ENCODE measurements at regions of chr2 and their contacts with region 1.

Region 1: GRCh38 chr2:45611020-45611737 is at the start of gene SRBD1:
- DNase-seq: peak; percentile 96
- H3K4me3 Mint-ChIP-seq: peak within 1 kb of the TSS; percentile 96
- H3K27ac Mint-ChIP-seq: peak within 1 kb of the TSS; percentile 94
- H3K4me1 Mint-ChIP-seq: peaks cover 53% of the 10 kb centered on the region
- H3K27me3 Mint-ChIP-seq: no peaks in the 10 kb centered on the region
- CTCF ChIP-seq: no peak
- total RNA-seq, gene SRBD1: 17.3 and 18.2 TPM in 2 replicates

Region 2: GRCh38 chr2:45585267-45585861 is 25.8 kb before region 1 on chr2:
- CTCF ChIA-PET with region 1: interaction called, 17 read pairs
- POLR2A ChIA-PET with region 1: interaction called, 6 read pairs
- intact Hi-C with region 1: loop called (anchors 1 kb)
- DNase-seq: peak; percentile 59
- H3K4me3 Mint-ChIP-seq: no peak overlapping the region
- H3K27ac Mint-ChIP-seq: no peak overlapping the region
- H3K4me1 Mint-ChIP-seq: peaks cover 7% of the 10 kb centered on the region
- H3K27me3 Mint-ChIP-seq: no peaks in the 10 kb centered on the region
- CTCF ChIP-seq: peak; percentile 54

Region 3: DNA sequence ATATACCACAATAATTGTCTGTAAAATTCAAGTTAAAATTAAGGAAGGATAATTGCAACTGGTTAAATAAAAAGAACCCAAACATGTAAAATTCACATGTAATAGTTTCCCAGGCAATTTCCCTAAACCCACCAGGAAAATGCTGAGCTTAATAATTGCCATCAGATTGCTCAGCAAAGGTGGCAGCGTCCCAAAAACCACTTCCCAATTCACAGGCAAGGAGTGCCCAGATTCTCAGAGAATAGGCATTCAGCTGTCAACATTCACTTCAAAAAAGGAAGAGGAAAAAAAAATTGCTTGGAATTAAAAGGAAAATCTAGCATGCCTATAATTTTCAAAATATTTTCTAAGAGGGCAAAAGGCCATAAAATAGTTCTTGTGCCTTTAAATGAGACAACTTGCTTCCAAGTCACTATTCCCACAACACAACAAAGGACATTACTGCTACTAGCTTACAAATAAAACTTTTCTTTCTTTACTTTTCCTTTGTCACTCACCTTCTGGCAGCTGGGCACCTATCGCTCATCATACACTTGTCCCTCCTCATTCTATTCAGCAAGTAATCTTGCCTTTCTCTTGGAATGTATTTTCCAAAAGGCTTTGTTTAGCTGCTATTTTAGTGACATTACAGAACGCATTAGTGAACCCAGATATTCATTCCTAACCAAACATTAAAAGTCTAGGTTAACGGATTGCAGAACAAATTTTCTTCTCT is 15.3 kb before region 1 on chr2:
- CTCF ChIA-PET with region 1: interaction called, 8 read pairs
- POLR2A ChIA-PET with region 1: interaction called, 11 read pairs
- intact Hi-C with region 1: no loop called
- DNase-seq: peak; percentile 42
- H3K4me3 Mint-ChIP-seq: peak overlapping the region; percentile 1
- H3K27ac Mint-ChIP-seq: peak overlapping the region; percentile 80
- H3K4me1 Mint-ChIP-seq: peaks cover 10% of the 10 kb centered on the region
- H3K27me3 Mint-ChIP-seq: no peaks in the 10 kb centered on the region
- CTCF ChIP-seq: no peak

Region 4: GRCh38 chr2:45681675-45682074 is 70.5 kb after region 1 on chr2:
- CTCF ChIA-PET with region 1: no interaction called
- POLR2A ChIA-PET with region 1: no interaction called
- intact Hi-C with region 1: no loop called
- DNase-seq: peak; percentile 84
- H3K4me3 Mint-ChIP-seq: no peak overlapping the region
- H3K27ac Mint-ChIP-seq: no peak overlapping the region
- H3K4me1 Mint-ChIP-seq: peaks cover 30% of the 10 kb centered on the region
- H3K27me3 Mint-ChIP-seq: no peaks in the 10 kb centered on the region
- CTCF ChIP-seq: no peak

Region 5: GRCh38 chr2:45964226-45964845 is 353.2 kb after region 1 on chr2:
- CTCF ChIA-PET with region 1: interaction called, 3 read pairs
- POLR2A ChIA-PET with region 1: interaction called, 10 read pairs
- intact Hi-C with region 1: no loop called
- DNase-seq: peak; percentile 100
- H3K4me3 Mint-ChIP-seq: no peak overlapping the region
- H3K27ac Mint-ChIP-seq: peak overlapping the region; percentile 84
- H3K4me1 Mint-ChIP-seq: peaks cover 42% of the 10 kb centered on the region
- H3K27me3 Mint-ChIP-seq: no peaks in the 10 kb centered on the region
- CTCF ChIP-seq: no peak

Measured in MCF 10A (cell line).